Left ventricle myocardium superior (tissue), 1 donor: ENCODE measurements at regions of chr9 and their contacts with region 1.

Region 1: DNA sequence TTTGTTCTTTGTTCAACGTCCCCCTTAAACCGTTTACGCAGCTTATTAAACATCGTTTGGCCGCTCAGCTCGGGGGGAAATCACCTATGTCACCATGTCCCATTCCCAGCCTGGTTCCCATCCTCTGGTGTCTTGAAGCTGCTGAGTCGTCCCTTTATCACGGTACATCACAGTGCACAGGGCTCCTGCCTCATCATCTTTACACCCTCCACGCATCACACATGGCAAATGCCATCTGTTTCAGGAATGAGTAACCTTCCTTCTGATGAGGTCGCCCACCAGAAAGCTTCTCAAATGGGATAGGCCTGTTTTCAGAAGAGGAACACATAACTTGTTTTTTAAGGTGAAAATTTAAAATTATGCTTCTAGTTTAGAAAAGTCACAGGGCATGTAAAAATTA is 7.9 kb upstream of the LHX6 start:
- DNase-seq: no peak
- ATAC-seq: no peak

Region 2: DNA sequence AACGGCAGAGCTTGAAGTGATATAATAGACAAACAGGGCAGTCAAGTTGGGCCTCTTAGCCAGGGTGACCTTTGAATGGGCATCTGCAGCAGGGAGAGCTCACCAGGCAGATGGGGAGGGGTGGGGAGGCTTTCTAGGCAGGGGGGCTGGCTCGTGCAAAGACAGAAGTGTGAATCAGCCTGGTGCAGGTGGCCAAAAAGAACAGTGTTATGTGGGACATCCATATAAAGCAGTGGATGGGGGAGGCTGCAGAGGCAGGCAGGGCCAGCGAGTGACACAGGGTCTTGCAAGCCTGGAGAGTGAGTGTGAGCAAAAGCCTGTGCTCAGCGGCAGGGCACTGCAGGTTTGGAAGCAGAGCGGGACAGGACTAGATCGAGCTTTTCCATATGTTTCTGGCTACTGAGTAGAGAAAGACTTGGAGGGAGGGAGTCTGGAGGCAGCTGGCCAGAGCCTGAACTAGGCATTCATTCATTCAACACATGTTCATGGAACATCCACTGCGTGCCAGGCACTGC is 129.3 kb before region 1 on chr9:
- intact Hi-C with region 1: no loop called
- DNase-seq: no peak
- ATAC-seq: peak; percentile 89

Region 3: GRCh38 chr9:122144836-122145591 is 91.7 kb before region 1 on chr9:
- intact Hi-C with region 1: no loop called
- DNase-seq: no peak
- ATAC-seq: peak; percentile 32

Region 4: GRCh38 chr9:122320413-122320881 is 83.8 kb after region 1 on chr9:
- intact Hi-C with region 1: loop called (anchors 5 kb)
- DNase-seq: no peak
- ATAC-seq: no peak

Region 5: GRCh38 chr9:122445155-122445749 is 208.6 kb after region 1 on chr9:
- intact Hi-C with region 1: no loop called
- DNase-seq: no peak
- ATAC-seq: no peak